Activated naive CD4-positive, alpha-beta T cell treated with anti-CD3 and anti-CD28 coated beads for 36 hours (primary cell): ENCODE measurements at regions of chr6 and their contacts with region 1.

Region 1: GRCh38 chr6:43174263-43175112 is 3.4 kb downstream of the SRF start:
- DNase-seq: peak; percentile 99
- H3K4me3 Mint-ChIP-seq: peak overlapping the region; percentile 90
- H3K27ac Mint-ChIP-seq: peak overlapping the region; percentile 80
- H3K4me1 Mint-ChIP-seq: peaks cover 36% of the 10 kb centered on the region
- H3K27me3 Mint-ChIP-seq: no peaks in the 10 kb centered on the region

Region 2: DNA sequence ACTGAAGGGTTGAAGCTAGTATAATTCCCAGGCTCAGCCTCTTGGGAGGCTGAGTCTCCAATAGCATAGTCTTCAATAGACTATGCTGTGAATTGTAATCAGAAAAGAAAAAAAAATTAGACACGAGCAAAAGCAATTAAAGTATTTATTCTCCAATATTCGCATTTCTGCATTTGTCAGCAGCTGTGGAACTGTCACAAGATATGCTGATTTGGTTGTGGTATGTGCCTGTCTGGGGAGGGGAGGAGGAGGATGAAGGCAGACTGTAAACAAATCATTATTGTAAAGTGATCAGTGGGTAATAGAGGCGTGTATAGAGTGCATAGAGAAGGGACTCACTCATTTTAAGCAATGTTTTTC is 402.8 kb before region 1 on chr6:
- CTCF ChIA-PET with region 1: no interaction called
- intact Hi-C with region 1: loop called (anchors 5 kb)
- DNase-seq: no peak
- H3K4me3 Mint-ChIP-seq: peak overlapping the region; percentile 71
- H3K27ac Mint-ChIP-seq: peak overlapping the region; percentile 96
- H3K4me1 Mint-ChIP-seq: peaks cover 62% of the 10 kb centered on the region
- H3K27me3 Mint-ChIP-seq: no peaks in the 10 kb centered on the region

Region 3: GRCh38 chr6:43013843-43014433 is 160.6 kb before region 1 on chr6 and contains the starts of genes KLHDC3 and MEA1:
- CTCF ChIA-PET with region 1: no interaction called
- intact Hi-C with region 1: loop called (anchors 1 kb)
- DNase-seq: peak; percentile 100
- H3K4me3 Mint-ChIP-seq: peak within 1 kb of the TSS; percentile 95
- H3K27ac Mint-ChIP-seq: peak within 1 kb of the TSS; percentile 88
- H3K4me1 Mint-ChIP-seq: peaks cover 53% of the 10 kb centered on the region
- H3K27me3 Mint-ChIP-seq: no peaks in the 10 kb centered on the region
- total RNA-seq, gene KLHDC3: 58.6 to 58.9 TPM
- total RNA-seq, gene MEA1: 80.6 to 85.1 TPM

Region 4: GRCh38 chr6:43143235-43144124 is 31.0 kb before region 1 on chr6:
- CTCF ChIA-PET with region 1: interaction called, 11 read pairs
- intact Hi-C with region 1: no loop called
- DNase-seq: peak; percentile 83
- H3K4me3 Mint-ChIP-seq: no peak overlapping the region
- H3K27ac Mint-ChIP-seq: no peak overlapping the region
- H3K4me1 Mint-ChIP-seq: peaks cover 16% of the 10 kb centered on the region
- H3K27me3 Mint-ChIP-seq: no peaks in the 10 kb centered on the region

Region 5: DNA sequence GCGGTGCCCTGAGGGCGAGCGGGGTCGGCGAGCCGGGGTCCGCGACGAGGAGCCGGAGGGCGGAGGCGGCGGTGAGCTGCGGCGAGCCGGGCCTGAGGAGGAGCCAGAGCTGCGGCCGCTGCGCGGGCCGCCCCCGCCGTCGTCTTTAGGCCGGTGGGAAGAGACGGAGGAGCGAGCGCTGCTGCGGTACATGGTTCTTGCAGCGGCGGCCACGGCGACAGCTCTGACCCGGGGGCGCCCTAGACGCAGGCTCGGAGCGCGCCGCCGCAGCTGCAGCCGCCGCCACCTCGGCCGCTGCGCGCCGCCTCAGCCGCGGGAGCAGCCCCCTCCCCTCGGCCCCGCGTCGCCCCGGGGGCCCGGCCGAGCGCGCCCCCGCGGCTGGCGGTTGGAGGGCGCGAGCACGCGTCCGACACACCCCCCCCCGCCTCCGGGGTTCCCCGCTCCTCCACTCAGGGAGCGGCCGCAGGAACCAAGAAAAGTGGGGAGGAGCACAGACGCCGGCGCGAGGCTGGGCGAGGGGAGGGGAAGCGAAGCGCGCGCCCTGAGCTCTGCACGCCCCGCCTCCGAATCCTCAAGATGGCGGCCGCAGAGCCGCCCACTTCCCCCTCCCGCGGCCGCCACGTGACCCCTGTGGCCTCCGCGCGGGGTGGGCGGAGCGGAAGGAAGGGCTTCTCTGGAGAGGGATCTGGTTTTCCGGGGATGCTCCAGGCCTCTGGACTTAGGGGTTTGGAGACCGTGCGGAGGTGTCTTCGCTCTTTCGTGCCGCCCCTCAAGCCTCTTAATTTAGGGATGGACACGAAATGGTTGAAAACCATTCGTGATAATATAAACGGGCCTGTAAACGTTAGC is 194.9 kb after region 1 on chr6 and contains the start of gene ZNF318:
- CTCF ChIA-PET with region 1: interaction called, 6 read pairs
- intact Hi-C with region 1: loop called (anchors 1 kb)
- DNase-seq: peak; percentile 95
- H3K4me3 Mint-ChIP-seq: peak within 1 kb of the TSS; percentile 87
- H3K27ac Mint-ChIP-seq: peak within 1 kb of the TSS; percentile 90
- H3K4me1 Mint-ChIP-seq: peaks cover 36% of the 10 kb centered on the region
- H3K27me3 Mint-ChIP-seq: no peaks in the 10 kb centered on the region
- total RNA-seq, gene ZNF318: 9.3 to 9.9 TPM

Region 6: GRCh38 chr6:43477235-43478007 is 302.9 kb after region 1 on chr6 and contains the start of gene TJAP1:
- CTCF ChIA-PET with region 1: no interaction called
- intact Hi-C with region 1: loop called (anchors 2 kb)
- DNase-seq: peak; percentile 98
- H3K4me3 Mint-ChIP-seq: peak within 1 kb of the TSS; percentile 87
- H3K27ac Mint-ChIP-seq: peak within 1 kb of the TSS; percentile 67
- H3K4me1 Mint-ChIP-seq: peaks cover 45% of the 10 kb centered on the region
- H3K27me3 Mint-ChIP-seq: no peaks in the 10 kb centered on the region
- total RNA-seq, gene TJAP1: 23.0 to 24.6 TPM

Region 7: DNA sequence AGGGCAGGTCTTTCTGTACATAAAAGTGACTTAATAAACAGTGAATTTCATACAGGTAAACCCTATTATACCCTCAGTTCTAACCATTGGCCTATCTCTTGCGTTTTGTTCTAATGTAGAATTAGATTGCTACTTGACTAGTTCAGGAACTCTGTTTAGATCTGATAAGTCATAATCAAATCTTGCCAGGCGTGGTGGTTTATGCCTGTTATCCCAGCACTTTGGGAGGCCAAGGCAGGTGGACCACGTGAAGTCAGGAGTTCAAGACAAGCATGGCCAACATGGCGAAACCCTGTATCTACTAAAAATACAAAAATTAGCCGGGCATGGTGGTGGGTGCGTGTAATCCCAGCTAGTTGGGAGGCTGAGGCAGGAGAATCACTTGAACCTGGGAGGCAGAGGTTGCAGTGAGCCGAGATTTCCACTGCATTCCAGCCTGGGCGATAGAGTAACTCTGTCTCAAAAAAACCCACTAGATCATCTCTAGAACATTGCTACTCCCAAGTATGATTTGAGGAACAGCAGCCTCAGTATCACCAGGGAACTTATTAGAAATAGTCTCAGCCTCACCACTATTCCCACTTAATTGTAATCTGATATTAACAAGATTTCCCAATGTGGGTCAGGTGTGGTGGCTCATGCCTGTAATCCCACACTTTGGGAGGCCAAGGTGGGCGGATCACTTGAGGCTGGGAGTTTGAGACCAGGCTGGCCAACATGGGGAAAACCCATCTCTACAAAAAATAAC is 442.4 kb after region 1 on chr6:
- CTCF ChIA-PET with region 1: no interaction called
- intact Hi-C with region 1: no loop called
- DNase-seq: no peak
- H3K4me3 Mint-ChIP-seq: no peak overlapping the region
- H3K27ac Mint-ChIP-seq: peak overlapping the region; percentile 36
- H3K4me1 Mint-ChIP-seq: no peaks in the 10 kb centered on the region
- H3K27me3 Mint-ChIP-seq: no peaks in the 10 kb centered on the region

Region 8: GRCh38 chr6:43629505-43630300 is 455.2 kb after region 1 on chr6:
- CTCF ChIA-PET with region 1: no interaction called
- intact Hi-C with region 1: loop called (anchors 5 kb)
- DNase-seq: peak; percentile 98
- H3K4me3 Mint-ChIP-seq: peak overlapping the region; percentile 98
- H3K27ac Mint-ChIP-seq: peak overlapping the region; percentile 99
- H3K4me1 Mint-ChIP-seq: peaks cover 33% of the 10 kb centered on the region
- H3K27me3 Mint-ChIP-seq: no peaks in the 10 kb centered on the region